Activated B cell treated with CpG ODN at 0.5 μM for 24 hours (primary cell): ENCODE measurements at regions of chr17 and their contacts with region 1.

Region 1: GRCh38 chr17:74449773-74450172 is 16.7 kb upstream of the CD300A start:
- DNase-seq: no peak
- ATAC-seq: no peak
- H3K4me3 Mint-ChIP-seq: no peak overlapping the region
- H3K27ac Mint-ChIP-seq: no peak overlapping the region
- H3K4me1 Mint-ChIP-seq: peaks cover 3% of the 10 kb centered on the region
- H3K27me3 Mint-ChIP-seq: peaks cover 24% of the 10 kb centered on the region
- CTCF ChIP-seq: no peak

Region 2: GRCh38 chr17:74631468-74632450 is 182.0 kb after region 1 on chr17:
- CTCF ChIA-PET with region 1: no interaction called
- POLR2A ChIA-PET with region 1: no interaction called
- intact Hi-C with region 1: loop called (anchors 1 kb)
- DNase-seq: no peak
- ATAC-seq: peak; percentile 83
- H3K4me3 Mint-ChIP-seq: peak overlapping the region; percentile 62
- H3K27ac Mint-ChIP-seq: peak overlapping the region; percentile 65
- H3K4me1 Mint-ChIP-seq: peaks cover 51% of the 10 kb centered on the region
- H3K27me3 Mint-ChIP-seq: peaks cover 3% of the 10 kb centered on the region
- CTCF ChIP-seq: no peak